ENCODE measurements at regions of chr20 and their contacts with region 1.

Region 1: GRCh38 chr20:57596998-57597939 is 23.0 kb downstream of the ZBP1 start:
- DNase-seq: peak; percentile 87
- H3K4me3 ChIP-seq: peak overlapping the region; percentile 15 to 29
- H3K27ac ChIP-seq: no peak overlapping the region
- H3K4me1 ChIP-seq: peaks cover 4% of the 10 kb centered on the region
- H3K27me3 ChIP-seq: no peaks in the 10 kb centered on the region
- CTCF ChIP-seq: peak; percentile 94 to 98 (median 94)
- POLR2A ChIP-seq: no peak

Region 2: GRCh38 chr20:57514273-57514751 is 83.0 kb before region 1 on chr20:
- intact Hi-C with region 1: loop called (anchors 5 kb)
- DNase-seq: peak; percentile 78
- H3K4me3 ChIP-seq: no peak overlapping the region
- H3K27ac ChIP-seq: no peak overlapping the region
- H3K4me1 ChIP-seq: no peaks in the 10 kb centered on the region
- H3K27me3 ChIP-seq: no peaks in the 10 kb centered on the region
- CTCF ChIP-seq: peak; percentile 71 to 78 (median 75)
- POLR2A ChIP-seq: no peak

Region 3: GRCh38 chr20:57661199-57662027 is 64.1 kb after region 1 on chr20:
- intact Hi-C with region 1: no loop called
- DNase-seq: peak; percentile 12
- H3K4me3 ChIP-seq: no peak overlapping the region
- H3K27ac ChIP-seq: no peak overlapping the region
- H3K4me1 ChIP-seq: no peaks in the 10 kb centered on the region
- H3K27me3 ChIP-seq: no peaks in the 10 kb centered on the region
- CTCF ChIP-seq: no peak
- POLR2A ChIP-seq: no peak

Region 4: DNA sequence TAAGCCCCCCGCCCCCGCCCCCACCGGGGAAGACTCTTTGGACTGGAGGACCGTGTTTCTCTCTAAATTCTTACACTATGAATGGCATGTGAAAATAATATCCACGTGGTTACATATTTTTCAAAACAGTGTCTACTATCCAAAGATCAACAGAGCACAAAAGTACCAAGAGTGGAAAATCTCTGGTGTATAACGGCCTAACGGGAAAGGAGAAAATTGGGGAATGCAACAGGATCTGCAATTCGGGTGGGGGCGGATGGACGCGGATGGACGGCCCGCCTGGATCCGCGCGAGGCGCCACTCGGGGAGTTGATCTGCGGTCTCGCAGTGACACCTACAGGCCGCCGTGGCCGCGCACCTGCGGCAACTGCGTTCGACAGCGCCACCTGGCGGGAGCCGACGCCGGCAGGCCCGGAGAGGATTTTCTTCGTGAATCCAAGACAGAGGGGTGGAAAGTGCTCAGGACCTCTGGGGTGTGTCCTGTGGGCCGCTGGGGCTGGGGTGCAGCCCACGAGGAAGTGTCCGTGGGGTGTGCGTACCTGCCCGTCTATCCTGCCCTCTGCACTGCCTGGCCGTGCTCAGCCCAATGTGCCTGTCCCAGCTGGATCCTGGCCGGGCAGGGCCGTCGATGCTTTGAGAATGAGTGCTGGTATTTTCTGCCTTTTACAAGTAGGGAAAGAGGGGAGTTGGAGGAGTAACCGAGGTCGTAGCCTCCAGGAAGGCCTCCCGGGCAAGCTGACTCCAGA is 612.6 kb after region 1 on chr20:
- intact Hi-C with region 1: loop called (anchors 2 kb)
- DNase-seq: peak; percentile 91
- H3K4me3 ChIP-seq: peak overlapping the region in 1 of 2 donors; percentile 9
- H3K27ac ChIP-seq: no peak overlapping the region
- H3K4me1 ChIP-seq: no peaks in the 10 kb centered on the region
- H3K27me3 ChIP-seq: no peaks in the 10 kb centered on the region
- CTCF ChIP-seq: peak; percentile 100
- POLR2A ChIP-seq: no peak

Measured in testis (tissue), 5 donors.